ENCODE measurements at regions of chr3 and their contacts with region 1.

Region 1: DNA sequence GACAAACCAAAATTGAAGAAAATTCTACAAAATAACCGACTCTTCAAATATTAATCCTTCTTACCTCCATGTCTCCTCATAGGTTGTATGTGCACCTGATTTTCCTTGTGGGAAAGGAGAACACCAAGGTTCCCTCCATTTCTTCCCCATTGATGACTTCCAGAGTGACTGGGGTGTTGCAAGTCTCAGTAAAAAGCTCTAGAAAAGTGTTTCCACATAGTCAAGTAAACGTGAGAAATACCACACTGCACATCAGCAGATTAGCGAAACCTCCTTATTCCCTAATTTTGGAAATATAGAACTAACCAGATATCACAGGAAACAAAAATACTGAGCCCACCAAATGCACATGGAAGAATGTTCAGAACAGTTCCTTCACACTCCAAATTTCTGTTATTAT is 4.9 kb upstream of the RPN1 start:
- DNase-seq: no peak
- H3K4me3 Mint-ChIP-seq: no peak overlapping the region
- H3K27ac Mint-ChIP-seq: no peak overlapping the region
- H3K4me1 Mint-ChIP-seq: peaks cover 9% of the 10 kb centered on the region
- H3K27me3 Mint-ChIP-seq: no peaks in the 10 kb centered on the region

Region 2: GRCh38 chr3:128278761-128279600 is 376.6 kb before region 1 on chr3:
- intact Hi-C with region 1: no loop called
- DNase-seq: no peak
- H3K4me3 Mint-ChIP-seq: no peak overlapping the region
- H3K27ac Mint-ChIP-seq: no peak overlapping the region
- H3K4me1 Mint-ChIP-seq: no peaks in the 10 kb centered on the region
- H3K27me3 Mint-ChIP-seq: no peaks in the 10 kb centered on the region

Region 3: GRCh38 chr3:128623762-128624176 is 31.8 kb before region 1 on chr3:
- intact Hi-C with region 1: loop called (anchors 1 kb)
- DNase-seq: no peak
- H3K4me3 Mint-ChIP-seq: no peak overlapping the region
- H3K27ac Mint-ChIP-seq: no peak overlapping the region
- H3K4me1 Mint-ChIP-seq: peaks cover 22% of the 10 kb centered on the region
- H3K27me3 Mint-ChIP-seq: no peaks in the 10 kb centered on the region

Region 4: DNA sequence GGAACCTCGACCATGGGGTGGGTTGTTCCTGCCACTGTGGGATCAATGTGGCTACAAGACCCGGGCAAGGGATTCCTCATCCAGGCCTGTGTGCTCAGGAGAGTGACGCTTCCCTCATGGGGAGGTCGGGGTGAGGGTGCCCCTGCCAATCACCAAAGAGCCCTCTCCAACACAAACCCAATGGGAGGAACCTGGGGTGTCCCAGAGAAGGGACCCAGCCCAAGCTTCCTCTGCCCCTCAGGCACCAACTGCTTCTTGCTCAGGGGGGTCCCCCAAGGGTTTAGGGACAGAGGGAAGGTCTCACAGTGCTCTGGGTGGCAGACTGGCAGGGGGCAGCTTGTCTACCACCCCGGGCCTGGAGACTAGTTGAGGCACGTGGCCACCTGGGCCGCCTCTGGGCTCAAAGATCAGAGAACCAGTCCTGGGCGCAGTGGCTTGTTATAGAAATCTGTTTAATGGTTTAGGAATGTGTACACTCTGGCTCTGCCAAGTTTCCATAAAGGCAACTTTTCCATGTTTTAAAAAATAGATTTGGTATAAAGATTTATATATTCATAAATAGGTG is 431.7 kb after region 1 on chr3:
- intact Hi-C with region 1: no loop called
- DNase-seq: no peak
- H3K4me3 Mint-ChIP-seq: no peak overlapping the region
- H3K27ac Mint-ChIP-seq: no peak overlapping the region
- H3K4me1 Mint-ChIP-seq: peaks cover 2% of the 10 kb centered on the region
- H3K27me3 Mint-ChIP-seq: no peaks in the 10 kb centered on the region

Measured in activated CD4-positive, alpha-beta T cell treated with anti-CD3 and anti-CD28 coated beads, Interleukin-2, amount 10 ng/mL, durations not matched to agents 24 days and 14 days (primary cell).